Activated CD4-positive, alpha-beta T cell treated with anti-CD3 and anti-CD28 coated beads for 36 hours (primary cell): ENCODE measurements at regions of chr19 and their contacts with region 1.

Region 1: GRCh38 chr19:46265217-46265828 is 31.5 kb upstream of the HIF3A start:
- DNase-seq: peak; percentile 82
- ATAC-seq: peak; percentile 75
- H3K4me3 Mint-ChIP-seq: no peak overlapping the region
- H3K27ac Mint-ChIP-seq: no peak overlapping the region
- H3K4me1 Mint-ChIP-seq: peaks cover 11% of the 10 kb centered on the region
- H3K27me3 Mint-ChIP-seq: peaks cover 46% of the 10 kb centered on the region

Region 2: GRCh38 chr19:45817010-45817724 is 448.2 kb before region 1 on chr19:
- CTCF ChIA-PET with region 1: no interaction called
- POLR2A ChIA-PET with region 1: no interaction called
- intact Hi-C with region 1: loop called in 1 of 2 experiments (anchors 1 kb)
- DNase-seq: peak; percentile 99
- ATAC-seq: peak; percentile 100
- H3K4me3 Mint-ChIP-seq: no peak overlapping the region
- H3K27ac Mint-ChIP-seq: no peak overlapping the region
- H3K4me1 Mint-ChIP-seq: peaks cover 7% of the 10 kb centered on the region
- H3K27me3 Mint-ChIP-seq: peaks cover 10% of the 10 kb centered on the region

Region 3: GRCh38 chr19:46021531-46022041 is 243.7 kb before region 1 on chr19:
- CTCF ChIA-PET with region 1: interaction called, 79 read pairs
- POLR2A ChIA-PET with region 1: no interaction called
- intact Hi-C with region 1: no loop called
- DNase-seq: no peak
- ATAC-seq: no peak
- H3K4me3 Mint-ChIP-seq: no peak overlapping the region
- H3K27ac Mint-ChIP-seq: no peak overlapping the region
- H3K4me1 Mint-ChIP-seq: peaks cover 14% of the 10 kb centered on the region
- H3K27me3 Mint-ChIP-seq: peaks cover 13% of the 10 kb centered on the region

Region 4: DNA sequence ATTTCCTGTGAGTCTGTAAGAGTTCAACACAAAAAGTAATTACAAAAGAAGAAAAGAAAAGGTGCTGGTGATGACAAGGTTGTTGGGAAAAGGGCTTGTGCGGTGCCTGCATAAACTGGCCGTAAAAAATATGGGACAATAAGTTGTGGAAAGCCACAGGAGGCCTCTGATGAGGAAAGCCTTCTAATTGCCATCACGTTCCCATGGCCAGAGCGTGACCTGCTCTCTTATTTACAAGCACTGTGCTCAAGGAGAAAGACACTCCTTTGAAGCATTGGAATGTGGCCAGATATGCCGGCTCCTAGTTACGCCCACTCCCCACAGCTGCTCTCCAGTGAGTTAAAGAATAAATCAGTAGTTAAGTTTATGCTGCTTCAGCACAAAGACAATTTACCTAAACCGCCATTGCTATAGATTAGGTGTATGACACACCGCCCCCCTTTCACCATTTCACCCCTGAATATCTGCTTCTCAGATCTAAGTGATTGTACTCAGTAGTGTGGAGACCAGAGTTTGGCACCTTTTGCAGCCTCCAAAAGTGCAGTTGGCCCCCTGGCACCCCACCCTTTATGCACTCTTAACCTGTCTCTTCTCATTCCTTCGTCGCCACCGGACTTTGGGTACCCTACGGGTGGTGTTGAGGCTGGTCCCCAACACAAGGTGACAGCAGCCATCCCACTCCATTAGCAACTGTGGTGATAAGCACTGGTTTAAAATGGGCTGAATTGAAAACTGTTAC is 234.3 kb before region 1 on chr19:
- CTCF ChIA-PET with region 1: interaction called, 79 read pairs
- POLR2A ChIA-PET with region 1: no interaction called
- intact Hi-C with region 1: loop called (anchors 1 kb)
- DNase-seq: no peak
- ATAC-seq: no peak
- H3K4me3 Mint-ChIP-seq: no peak overlapping the region
- H3K27ac Mint-ChIP-seq: no peak overlapping the region
- H3K4me1 Mint-ChIP-seq: peaks cover 12% of the 10 kb centered on the region
- H3K27me3 Mint-ChIP-seq: peaks cover 8% of the 10 kb centered on the region

Region 5: DNA sequence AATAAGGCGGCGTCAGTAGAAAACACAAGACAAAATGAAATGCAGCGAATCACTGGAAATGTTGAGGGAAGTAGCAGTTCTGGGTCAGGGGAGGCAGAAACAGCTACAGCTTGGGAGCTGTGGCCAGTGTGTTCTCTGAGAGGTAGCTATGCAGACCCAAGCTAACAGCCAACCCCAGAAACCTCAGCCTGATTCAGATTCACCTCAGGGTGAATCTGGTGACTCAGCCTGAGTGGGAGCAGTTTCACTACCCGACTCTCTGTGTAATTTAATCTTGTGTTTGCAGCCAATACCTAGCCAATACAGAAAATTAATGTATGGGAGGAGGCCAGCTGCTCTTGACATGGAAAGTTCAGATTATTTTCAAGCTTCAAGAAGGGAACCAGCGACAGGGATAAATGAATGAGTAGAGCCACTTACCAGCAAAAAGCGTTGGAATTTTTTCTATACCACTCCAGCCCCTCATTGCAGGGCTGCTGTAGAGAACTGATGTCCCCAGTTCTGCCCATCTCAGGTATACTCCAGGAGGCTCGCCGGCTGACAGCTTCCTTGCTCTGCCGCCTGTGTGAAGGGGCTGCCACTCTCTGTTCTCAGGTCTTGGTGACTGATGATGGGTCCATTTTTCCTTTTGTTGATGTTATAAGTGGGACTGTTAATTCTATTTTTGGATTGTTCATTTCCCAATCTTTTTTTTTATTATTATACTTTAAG is 149.8 kb before region 1 on chr19:
- CTCF ChIA-PET with region 1: interaction called, 5 read pairs
- POLR2A ChIA-PET with region 1: interaction called, 3 read pairs
- intact Hi-C with region 1: loop called (anchors 1 kb)
- DNase-seq: peak; percentile 84
- ATAC-seq: peak; percentile 99
- H3K4me3 Mint-ChIP-seq: no peak overlapping the region
- H3K27ac Mint-ChIP-seq: no peak overlapping the region
- H3K4me1 Mint-ChIP-seq: peaks cover 13% of the 10 kb centered on the region
- H3K27me3 Mint-ChIP-seq: peaks cover 59% of the 10 kb centered on the region

Region 6: GRCh38 chr19:46192992-46193650 is 72.2 kb before region 1 on chr19:
- CTCF ChIA-PET with region 1: interaction called, 8 read pairs
- POLR2A ChIA-PET with region 1: no interaction called
- intact Hi-C with region 1: loop called (anchors 1 to 2 kb)
- DNase-seq: peak; percentile 31
- ATAC-seq: peak; percentile 65
- H3K4me3 Mint-ChIP-seq: no peak overlapping the region
- H3K27ac Mint-ChIP-seq: no peak overlapping the region
- H3K4me1 Mint-ChIP-seq: no peaks in the 10 kb centered on the region
- H3K27me3 Mint-ChIP-seq: peaks cover 48% of the 10 kb centered on the region

Region 7: GRCh38 chr19:46339446-46339845 is 74.1 kb after region 1 on chr19:
- CTCF ChIA-PET with region 1: no interaction called
- POLR2A ChIA-PET with region 1: no interaction called
- intact Hi-C with region 1: no loop called
- DNase-seq: no peak
- ATAC-seq: no peak
- H3K4me3 Mint-ChIP-seq: no peak overlapping the region
- H3K27ac Mint-ChIP-seq: no peak overlapping the region
- H3K4me1 Mint-ChIP-seq: no peaks in the 10 kb centered on the region
- H3K27me3 Mint-ChIP-seq: no peaks in the 10 kb centered on the region

Region 8: DNA sequence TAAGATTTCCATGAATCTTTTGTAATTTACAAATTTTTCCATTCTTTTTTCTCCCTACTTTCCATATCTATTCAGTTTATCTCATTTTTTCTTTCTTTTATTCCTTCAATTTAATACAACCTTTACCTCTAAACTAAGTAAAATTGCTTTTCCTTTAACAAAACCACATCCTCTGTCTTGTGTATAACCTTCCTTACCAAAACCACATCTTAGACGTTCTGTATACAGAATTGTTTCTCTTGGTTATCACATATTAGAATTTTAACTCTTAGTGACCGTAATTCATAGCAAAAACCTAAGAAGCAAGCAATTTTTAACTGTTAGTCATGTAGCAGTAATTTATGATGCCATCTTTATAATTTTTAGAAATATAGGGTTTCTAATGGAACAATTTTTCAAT is 96.6 kb after region 1 on chr19:
- CTCF ChIA-PET with region 1: no interaction called
- POLR2A ChIA-PET with region 1: no interaction called
- intact Hi-C with region 1: no loop called
- DNase-seq: no peak
- ATAC-seq: no peak
- H3K4me3 Mint-ChIP-seq: peak overlapping the region; percentile 2
- H3K27ac Mint-ChIP-seq: no peak overlapping the region
- H3K4me1 Mint-ChIP-seq: peaks cover 20% of the 10 kb centered on the region
- H3K27me3 Mint-ChIP-seq: no peaks in the 10 kb centered on the region